ENCODE measurements at regions of chr1 and their contacts with region 1.

Region 1: GRCh38 chr1:225777583-225778336 is at the start of gene SRP9:
- DNase-seq: peak; percentile 97 to 100 (median 98)

Region 2: DNA sequence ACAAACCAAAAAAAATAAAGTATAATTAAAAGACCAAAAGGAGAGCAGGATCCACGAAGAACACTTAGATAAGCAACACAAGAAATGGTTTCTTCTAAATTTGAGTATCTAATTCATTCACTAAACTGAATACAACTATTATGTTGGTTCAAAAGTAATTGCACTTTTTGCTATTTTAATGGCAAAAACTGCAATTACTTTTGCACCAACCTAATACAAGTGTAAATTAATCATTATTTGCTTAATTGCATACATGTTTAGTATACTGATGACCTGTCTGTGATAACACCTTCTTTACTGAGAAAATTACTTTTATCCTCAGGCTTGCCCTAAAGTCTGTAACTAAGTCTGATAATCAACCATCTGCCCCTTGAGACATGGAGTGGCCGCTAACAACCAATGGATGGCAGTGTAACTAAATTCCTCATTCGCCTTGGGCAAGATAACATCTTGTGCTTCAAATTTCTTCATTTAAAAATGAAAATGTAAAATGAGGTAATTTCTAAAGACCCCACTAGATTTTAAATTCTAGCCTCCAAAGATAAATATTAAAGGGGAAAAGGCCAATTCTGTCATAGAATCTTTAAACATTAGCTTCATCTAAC is 210.1 kb before region 1 on chr1:
- intact Hi-C with region 1: loop called (anchors 10 kb)
- DNase-seq: no peak

Region 3: DNA sequence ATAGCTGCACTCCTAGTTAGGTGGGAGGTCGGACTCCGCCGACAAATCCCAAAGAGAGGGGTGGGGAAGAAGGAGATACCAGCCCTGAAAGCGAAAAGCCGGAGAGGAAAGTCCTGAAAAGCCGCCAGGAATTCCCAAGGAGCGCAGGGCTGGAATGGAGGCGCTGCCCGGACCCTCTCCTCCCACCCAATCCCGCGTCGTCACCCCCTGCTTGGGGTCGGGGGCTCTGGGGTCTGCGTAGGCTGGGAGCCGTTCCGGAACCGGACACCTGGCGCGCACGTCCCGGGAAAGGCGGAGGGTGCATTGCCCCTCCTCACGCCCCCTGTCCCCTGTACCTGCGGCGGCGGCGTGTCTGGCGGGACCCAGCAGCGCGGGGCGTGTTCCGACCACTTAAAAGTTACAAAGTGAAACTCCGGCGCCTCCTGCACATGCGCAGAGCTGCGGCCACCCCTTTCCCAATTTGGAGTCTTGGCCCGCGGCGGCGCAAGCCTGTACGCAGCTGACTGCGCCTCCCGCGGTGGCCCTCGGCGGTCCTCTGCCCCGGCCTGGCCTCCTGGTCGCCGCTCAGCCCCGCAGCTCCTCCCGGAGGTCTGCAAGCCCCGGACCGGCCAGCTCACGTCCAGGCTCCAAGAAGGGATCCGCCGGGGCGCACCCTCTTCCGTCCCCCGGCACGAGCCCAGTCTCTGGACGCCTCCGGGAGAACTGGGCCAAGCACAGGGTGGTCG is 104.4 kb after region 1 on chr1 and contains the start of gene TMEM63A:
- intact Hi-C with region 1: loop called (anchors 2 kb)
- DNase-seq: peak; percentile 81 to 97 (median 86)